Head of caudate nucleus (tissue), 42 donors: ENCODE measurements at regions of chr6 and their contacts with region 1.

Region 1: DNA sequence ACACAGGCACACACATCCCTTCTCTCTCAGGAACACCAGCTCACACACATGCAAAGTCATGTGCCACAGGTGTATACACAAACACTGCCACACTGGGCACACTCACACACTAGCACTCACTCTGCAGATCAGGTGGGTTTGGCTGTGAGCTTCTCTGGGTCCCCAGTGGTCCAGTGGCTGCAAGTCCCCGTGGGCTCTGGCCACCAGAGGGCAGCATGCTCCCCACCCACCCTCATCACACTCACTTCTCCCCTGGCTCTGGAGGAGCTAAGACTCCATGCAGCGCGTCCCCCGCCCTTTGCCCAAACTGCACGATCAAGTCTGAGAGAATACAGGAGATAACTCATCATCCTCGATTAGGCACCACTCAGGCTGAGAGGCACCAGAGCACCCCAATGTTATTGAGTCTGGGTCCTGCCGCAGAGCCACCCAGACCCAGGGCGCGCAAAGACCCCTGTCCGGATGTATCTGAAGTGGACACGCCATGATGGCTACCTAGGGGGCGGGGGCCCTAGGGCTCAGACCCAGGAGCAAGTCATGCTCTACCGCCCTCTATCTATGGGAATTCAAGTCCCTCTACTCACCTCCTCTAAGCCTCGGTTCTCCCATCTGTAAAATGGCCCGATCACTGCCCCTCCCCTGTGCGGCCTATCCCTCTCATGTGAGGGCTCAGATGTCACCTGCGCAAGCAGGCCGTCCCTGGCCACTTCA is 90.5 kb downstream of the GRM4 start:
- DNase-seq: peak in 40 of 42 donors; percentile 38 to 84 (median 60)

Region 2: GRCh38 chr6:34145161-34146020 is 90.0 kb after region 1 on chr6:
- intact Hi-C with region 1: loop called (anchors 10 kb)
- DNase-seq: peak in 36 of 42 donors; percentile 22 to 78 (median 52)